H1 (cell line): ENCODE measurements at regions of chr6 and their contacts with region 1.

Region 1: GRCh38 chr6:142207265-142207877 is 60.3 kb downstream of the VTA1 start:
- DNase-seq: peak; percentile 21 to 63
- H3K4me3 ChIP-seq: no peak overlapping the region
- H3K27ac ChIP-seq: no peak overlapping the region
- H3K4me1 ChIP-seq: no peaks in the 10 kb centered on the region
- H3K27me3 ChIP-seq: no peaks in the 10 kb centered on the region
- CTCF ChIP-seq: peak; percentile 48 to 89 (median 77)
- EP300 ChIP-seq: no peak
- POLR2A ChIP-seq: no peak
- RAD21 ChIP-seq: peak; percentile 91 to 92

Region 2: DNA sequence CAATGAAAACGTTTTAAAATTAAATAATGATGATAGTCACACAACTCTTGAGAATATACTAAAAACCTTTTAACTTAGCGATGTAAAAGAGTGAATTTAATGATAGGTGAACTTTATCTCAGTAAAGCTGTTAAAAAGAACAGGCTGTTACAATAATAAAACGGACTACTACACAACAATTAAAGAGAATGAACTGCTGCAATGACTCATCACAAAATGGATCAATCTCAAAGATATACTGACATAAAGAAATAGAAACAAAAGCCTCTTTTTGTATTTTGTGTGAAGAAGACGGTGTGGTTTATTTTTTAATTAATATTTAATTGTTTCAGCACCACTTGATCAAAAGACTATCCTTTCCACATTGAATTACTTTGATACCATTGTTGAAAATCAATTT is 427.1 kb before region 1 on chr6:
- CTCF ChIA-PET with region 1: no interaction called
- POLR2A ChIA-PET with region 1: no interaction called
- DNase-seq: no peak
- H3K4me3 ChIP-seq: no peak overlapping the region
- H3K27ac ChIP-seq: no peak overlapping the region
- H3K4me1 ChIP-seq: peaks cover 0 to 4% (median 0%) of the 10 kb centered on the region in 4 experiments; a peak in 1 of 7 replicates
- H3K27me3 ChIP-seq: no peaks in the 10 kb centered on the region
- CTCF ChIP-seq: no peak
- EP300 ChIP-seq: no peak
- POLR2A ChIP-seq: no peak
- RAD21 ChIP-seq: no peak

Region 3: GRCh38 chr6:142195862-142196541 is 11.4 kb before region 1 on chr6:
- CTCF ChIA-PET with region 1: interaction called, 16 read pairs
- POLR2A ChIA-PET with region 1: no interaction called
- DNase-seq: no peak
- H3K4me3 ChIP-seq: no peak overlapping the region
- H3K27ac ChIP-seq: no peak overlapping the region
- H3K4me1 ChIP-seq: no peaks in the 10 kb centered on the region
- H3K27me3 ChIP-seq: peaks cover 0 to 1% (median 0%) of the 10 kb centered on the region in 4 experiments; a peak in 1 of 7 replicates
- CTCF ChIP-seq: no peak
- EP300 ChIP-seq: no peak
- POLR2A ChIP-seq: no peak
- RAD21 ChIP-seq: no peak

Region 4: GRCh38 chr6:142218446-142218845 is 11.1 kb after region 1 on chr6:
- CTCF ChIA-PET with region 1: interaction called, 18 read pairs
- POLR2A ChIA-PET with region 1: no interaction called
- DNase-seq: no peak
- H3K4me3 ChIP-seq: no peak overlapping the region
- H3K27ac ChIP-seq: no peak overlapping the region
- H3K4me1 ChIP-seq: no peaks in the 10 kb centered on the region
- H3K27me3 ChIP-seq: no peaks in the 10 kb centered on the region
- CTCF ChIP-seq: no peak
- EP300 ChIP-seq: no peak
- POLR2A ChIP-seq: no peak
- RAD21 ChIP-seq: no peak